SK-MEL-5 (cell line): ENCODE measurements at regions of chr5 and their contacts with region 1.

Region 1: DNA sequence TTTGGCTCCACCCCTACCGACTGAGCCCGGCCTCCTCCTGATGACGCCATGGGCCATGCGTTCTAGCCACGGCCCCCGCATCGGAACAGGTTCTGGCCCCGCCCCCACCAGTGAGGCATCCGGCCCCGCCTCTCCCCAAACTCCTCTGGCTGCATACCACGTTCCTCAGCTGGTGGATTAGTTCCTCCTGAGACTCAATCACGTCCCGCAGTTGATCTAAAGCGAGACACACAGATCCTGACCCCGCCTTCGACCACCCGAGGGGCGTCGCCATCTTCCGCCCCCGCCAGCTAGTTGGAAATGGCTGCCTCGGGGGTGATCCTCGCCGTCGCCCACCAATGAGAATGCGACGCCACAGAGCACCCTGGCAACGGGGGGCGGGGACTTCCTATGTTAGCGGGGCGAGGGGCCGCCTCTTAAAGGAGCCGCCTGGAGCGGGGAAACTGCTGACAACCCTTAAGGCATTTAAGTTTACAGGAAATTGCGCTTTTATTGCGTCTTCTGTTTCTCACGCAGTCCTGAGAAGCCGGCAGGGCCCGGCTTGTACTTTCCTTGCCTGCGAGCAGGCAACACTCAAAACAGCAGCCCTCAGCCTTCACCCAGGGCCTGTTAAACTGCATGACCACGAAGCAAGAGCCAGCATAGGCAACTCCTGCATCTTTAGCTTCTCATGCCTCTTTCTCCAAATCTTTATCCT is at the start of gene SPATA24:
- DNase-seq: peak; percentile 97
- total RNA-seq, gene SPATA24: 9.7 and 13.3 TPM in 2 replicates

Region 2: DNA sequence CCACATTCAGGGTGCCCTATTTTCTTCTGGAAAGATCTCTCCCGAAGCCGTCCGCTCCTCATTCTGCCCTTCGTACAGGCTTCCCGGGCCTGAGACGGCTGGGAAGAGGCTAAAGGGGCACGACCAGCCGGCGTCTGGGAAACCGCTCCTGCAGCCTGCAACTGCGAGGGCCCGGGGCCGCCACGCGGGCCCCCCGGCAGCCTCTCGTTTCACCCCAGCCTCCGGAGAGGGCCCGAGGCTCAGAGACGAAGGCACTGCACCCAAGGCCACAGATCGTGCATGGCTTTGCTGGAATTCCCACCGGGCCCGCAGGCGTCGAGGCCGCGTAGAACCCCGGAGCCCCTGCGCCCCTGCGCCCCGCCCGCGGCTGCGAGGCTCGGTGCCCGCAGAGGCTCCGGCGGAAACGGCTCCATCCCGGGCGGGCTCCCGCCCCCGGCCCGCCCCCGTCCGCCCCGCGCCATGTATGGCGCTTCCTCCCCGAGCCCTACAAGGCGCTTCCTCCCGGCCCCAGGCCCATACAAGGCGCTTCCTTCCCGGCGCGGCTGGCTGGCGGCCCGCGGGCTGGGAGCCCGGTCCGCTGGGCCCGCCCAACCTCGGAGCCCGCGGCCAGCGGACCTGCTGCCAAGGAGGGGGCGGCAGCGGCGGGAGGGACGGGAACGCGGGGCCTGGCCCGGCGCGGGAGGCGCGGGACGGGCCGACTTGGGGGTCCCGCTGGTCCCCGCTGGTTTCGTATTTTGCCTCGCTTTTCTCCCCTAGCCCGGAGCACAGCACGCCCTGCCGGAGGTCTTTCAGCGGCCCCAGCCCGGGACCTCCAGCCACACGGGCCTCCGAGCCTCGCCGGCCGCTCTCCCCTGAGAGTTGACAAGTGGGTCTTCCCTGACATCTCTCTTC is 912.0 kb before region 1 on chr5:
- in situ Hi-C with region 1: no loop called
- DNase-seq: peak; percentile 81

Region 3: GRCh38 chr5:139495638-139496435 is 91.9 kb after region 1 on chr5:
- in situ Hi-C with region 1: no loop called
- DNase-seq: no peak

Region 4: DNA sequence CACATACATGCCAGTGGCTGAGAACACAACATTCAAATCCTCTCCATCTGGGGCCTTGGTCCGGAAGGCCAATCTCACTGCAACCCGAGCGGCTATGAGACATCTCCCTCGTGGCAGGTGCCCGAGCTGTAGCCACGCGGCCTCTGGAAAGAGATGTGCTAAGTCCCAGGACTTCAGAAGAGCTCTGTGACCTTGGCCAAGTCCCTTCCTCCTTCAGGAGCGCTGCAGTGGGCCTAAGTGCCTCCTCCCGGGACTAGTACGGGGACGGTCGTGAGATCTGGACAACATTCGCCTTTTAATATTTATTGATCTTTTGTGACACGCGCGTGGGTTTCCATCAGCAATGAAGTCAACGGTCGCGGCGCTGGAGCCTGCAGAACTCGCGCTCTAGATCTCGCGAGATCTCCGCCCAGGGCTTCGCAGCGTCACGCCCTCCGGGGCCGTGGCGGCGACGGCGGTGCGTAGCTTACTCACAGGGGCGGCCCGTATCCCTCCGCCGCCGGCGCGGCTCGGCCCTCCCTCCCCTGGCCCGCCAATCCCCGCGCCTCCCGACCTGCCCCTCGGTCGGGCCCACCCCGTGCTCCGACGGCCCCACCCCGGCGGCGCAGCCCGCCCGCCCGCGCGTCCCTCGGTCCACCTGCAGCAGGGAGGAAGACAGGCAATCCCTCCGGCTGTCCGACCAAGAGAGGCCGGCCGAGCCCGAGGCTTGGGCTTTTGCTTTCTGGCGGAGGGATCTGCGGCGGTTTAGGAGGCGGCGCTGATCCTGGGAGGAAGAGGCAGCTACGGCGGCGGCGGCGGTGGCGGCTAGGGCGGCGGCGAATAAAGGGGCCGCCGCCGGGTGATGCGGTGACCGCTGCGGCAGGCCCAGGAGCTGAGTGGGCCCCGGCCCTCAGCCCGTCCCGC is 157.1 kb after region 1 on chr5 and contains the start of gene UBE2D2:
- in situ Hi-C with region 1: loop called (anchors 25 kb)
- DNase-seq: peak; percentile 95
- total RNA-seq, gene UBE2D2: 57.4 and 70.7 TPM in 2 replicates